GM18951 (cell line): ENCODE measurements at regions of chr9 and their contacts with region 1.

Region 1: GRCh38 chr9:119409403-119409951 is 40.2 kb upstream of the BRINP1 start:
- POLR2A ChIP-seq: no peak

Region 2: DNA sequence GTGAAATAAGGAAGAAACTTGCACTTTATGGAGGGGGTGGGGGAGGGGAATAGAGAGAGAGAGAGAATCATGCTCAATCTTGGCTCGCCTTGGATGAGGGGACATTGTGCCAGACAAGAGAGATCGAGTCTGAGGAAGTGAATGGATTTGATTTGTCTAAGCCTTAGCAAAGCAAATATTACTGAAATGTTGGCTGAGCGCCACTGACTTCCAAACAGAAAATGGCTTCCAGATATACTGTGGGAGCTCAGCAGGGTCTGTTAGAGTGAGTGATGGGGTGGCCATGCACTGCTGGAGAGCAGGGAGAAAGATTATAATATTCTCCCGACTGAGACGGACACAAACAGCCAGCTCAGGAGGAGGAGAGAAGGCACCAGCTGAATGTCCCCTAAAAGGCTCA is 74.7 kb before region 1 on chr9:
- in situ Hi-C with region 1: no loop called
- POLR2A ChIP-seq: no peak

Region 3: DNA sequence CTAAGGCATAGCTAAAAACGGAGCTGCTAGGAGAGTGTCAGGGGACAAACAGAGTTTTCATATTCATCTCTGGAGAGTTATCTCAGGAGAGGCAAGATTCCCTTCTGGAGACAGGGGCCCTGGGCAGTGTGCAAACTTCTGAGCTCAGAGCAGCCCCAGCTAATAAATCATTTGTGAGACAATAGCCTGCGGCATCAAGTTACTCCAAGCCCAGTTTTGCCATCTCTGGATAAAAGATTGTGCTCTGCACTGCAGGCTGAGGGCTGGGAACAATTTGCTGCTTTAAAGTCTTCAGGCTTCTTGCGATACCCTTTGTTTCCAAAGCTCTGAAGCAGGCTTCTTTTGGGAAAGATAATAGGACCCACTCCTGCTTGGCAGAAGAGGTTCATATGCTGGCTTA is 124.0 kb after region 1 on chr9:
- in situ Hi-C with region 1: no loop called
- POLR2A ChIP-seq: no peak

Region 4: DNA sequence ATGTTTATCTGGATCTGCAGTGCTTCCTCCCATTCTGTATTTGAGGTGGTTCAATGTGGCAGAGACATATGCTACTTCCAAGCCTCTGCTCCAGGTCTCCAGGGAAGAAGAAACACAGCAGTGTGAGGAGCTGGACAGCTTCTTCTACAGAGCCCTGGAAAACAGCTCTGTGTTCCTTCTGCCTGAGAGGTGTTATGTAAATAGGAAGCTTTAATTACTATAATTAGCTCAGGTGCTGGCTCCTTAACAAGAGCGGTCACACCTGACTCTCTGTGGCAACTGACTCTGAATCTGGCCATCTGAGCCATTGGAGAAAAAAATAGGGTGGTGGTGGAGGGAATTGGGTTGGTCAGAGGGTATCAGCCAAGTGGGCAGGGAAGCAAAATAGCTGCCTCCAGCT is 292.2 kb after region 1 on chr9:
- in situ Hi-C with region 1: loop called (anchors 10 kb)
- POLR2A ChIP-seq: no peak

Region 5: DNA sequence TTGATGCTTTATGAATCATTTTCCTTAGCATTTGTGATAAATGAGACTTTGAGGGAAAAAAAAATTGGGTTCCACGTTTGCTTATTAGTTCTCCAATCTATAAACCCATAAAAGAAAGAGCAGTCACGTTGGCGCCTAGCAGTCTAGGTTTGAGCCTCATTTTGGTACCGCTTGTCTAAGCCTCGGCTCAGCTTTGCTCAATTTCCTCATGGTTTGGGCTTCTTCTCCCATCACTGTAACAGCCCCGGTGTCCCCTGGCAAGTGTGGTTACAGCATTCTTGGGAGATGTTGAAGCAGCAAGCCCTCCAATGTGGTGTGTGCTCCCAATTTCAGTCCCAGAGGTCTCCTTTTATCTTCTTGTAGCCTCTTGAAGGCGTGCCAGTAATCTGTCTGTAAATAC is 592.1 kb after region 1 on chr9:
- in situ Hi-C with region 1: no loop called
- POLR2A ChIP-seq: no peak

Region 6: GRCh38 chr9:120152295-120152694 is 742.8 kb after region 1 on chr9:
- in situ Hi-C with region 1: no loop called
- POLR2A ChIP-seq: no peak